Ascending aorta (tissue), 2 donors: ENCODE measurements at regions of chr3 and their contacts with region 1.

Region 1: GRCh38 chr3:52070724-52071621 is 14.6 kb upstream of the DUSP7 start:
- DNase-seq: peak in 1 of 2 donors; percentile 89
- H3K4me3 ChIP-seq: no peak overlapping the region
- H3K27ac ChIP-seq: peak overlapping the region; percentile 84 to 95
- H3K4me1 ChIP-seq: peaks cover 3 to 23% of the 10 kb centered on the region in 2 donors
- H3K27me3 ChIP-seq: no peaks in the 10 kb centered on the region
- CTCF ChIP-seq: peak; percentile 5 to 43 (median 8)

Region 2: DNA sequence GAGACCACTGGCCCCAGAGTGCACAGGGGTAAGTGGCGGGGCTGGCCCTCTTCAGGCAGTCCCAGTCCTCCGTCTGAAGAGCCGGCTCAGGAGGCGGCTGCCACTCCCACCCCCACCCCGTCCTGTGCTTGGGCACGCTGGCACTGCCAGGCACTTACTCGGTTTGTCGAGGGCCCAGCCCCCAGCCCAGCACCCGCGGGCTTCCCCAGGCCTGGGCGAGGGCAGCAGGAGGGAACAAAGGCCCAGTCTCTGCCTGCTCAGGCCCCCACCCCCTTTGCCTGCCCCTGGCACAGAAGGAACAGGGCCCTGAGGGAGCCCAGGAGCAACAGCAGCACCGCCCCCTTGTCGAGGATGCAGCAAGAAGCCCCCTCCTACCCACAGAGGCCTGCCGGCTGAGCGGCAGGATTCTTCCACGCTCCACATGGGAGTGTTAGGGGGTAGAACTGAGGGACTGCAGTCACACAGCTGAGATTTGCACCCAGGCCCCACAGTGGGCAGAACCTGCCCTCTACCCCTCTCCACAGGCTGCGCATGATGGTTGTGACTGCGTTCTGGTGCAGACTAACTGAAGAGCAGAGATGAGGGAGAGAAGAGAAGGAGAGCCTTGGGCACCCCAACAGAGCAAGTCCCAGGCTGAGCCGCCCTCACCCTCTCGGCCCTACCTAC is 23.5 kb before region 1 on chr3:
- intact Hi-C with region 1: no loop called
- DNase-seq: peak in 1 of 2 donors; percentile 81
- H3K4me3 ChIP-seq: peak overlapping the region in 1 of 2 donors; percentile 26
- H3K27ac ChIP-seq: peak overlapping the region; percentile 94 to 99
- H3K4me1 ChIP-seq: peaks cover 32 to 52% of the 10 kb centered on the region in 2 donors
- H3K27me3 ChIP-seq: no peaks in the 10 kb centered on the region
- CTCF ChIP-seq: no peak

Region 3: DNA sequence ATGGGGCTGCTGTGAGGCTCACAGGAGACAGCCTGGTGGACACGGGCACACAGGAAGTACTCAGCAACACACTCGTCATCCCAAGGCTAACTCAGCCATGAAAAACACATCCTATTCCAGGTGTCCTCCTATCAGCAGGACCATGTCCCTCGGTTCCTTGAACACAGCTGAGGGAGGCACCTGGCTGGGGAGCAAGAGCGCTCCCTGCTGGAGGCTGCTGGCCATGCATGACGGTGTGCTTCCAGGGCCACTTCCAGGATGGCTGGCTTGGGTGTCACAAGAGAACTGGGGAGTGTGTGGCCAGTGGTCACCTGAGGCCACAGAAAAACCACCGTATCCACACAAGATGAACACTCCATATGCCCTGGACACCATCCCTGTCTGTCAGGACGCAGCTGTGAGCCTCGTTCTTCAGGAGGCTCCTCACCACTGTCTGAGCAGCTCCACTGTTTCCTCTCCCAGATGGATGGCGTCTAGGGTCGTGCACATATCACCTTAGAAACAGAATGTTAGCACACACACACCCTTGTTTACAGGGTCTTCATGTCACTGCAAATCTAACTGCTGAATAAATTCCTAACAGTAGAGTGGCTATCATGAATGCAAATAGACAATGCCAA is 52.2 kb after region 1 on chr3:
- intact Hi-C with region 1: loop called (anchors 5 kb)
- DNase-seq: peak in 1 of 2 donors; percentile 89
- H3K4me3 ChIP-seq: no peak overlapping the region
- H3K27ac ChIP-seq: no peak overlapping the region
- H3K4me1 ChIP-seq: peaks cover 0 to 6% of the 10 kb centered on the region in 2 donors
- H3K27me3 ChIP-seq: no peaks in the 10 kb centered on the region
- CTCF ChIP-seq: peak; percentile 90 to 98 (median 97)